Posterior cingulate gyrus (tissue), 11 donors: ENCODE measurements at regions of chr15 and their contacts with region 1.

Region 1: DNA sequence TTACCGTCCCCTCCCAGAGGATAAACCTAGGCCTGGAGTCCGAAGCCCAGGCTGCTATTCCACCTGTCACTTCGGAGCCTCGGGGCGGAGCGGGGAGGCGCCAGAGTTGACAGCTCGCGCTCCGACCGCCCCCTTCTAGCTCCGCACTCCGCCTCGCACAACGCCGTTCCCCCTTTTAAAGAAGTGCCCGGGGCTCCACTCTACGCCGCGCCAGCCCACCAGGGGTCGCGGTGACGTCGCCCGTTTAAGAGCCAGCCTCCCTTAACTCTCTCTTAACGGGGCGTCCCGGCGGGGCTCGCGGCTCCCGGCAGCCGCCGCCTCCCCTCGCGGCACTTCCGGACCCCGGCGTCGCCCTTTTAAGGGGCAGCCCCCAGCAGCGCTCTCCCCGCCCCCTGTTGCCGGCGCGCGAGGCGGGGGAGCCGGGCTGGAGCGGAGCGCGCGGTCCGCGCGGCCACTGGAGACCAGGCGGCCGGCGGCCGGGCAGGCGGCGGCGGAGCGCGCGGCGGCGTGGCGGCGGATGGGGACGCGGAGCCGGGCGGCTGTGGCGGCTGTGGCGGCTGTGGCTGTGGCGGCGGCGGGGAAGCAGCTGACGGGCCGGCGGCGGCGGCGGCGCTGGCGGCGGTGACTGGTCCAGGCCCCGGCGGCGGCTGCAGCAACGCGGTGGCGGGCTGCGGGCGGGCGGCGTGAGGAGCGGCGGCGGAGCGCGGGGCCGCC is at the start of gene INAFM2:
- DNase-seq: peak; percentile 67 to 97 (median 85)

Region 2: DNA sequence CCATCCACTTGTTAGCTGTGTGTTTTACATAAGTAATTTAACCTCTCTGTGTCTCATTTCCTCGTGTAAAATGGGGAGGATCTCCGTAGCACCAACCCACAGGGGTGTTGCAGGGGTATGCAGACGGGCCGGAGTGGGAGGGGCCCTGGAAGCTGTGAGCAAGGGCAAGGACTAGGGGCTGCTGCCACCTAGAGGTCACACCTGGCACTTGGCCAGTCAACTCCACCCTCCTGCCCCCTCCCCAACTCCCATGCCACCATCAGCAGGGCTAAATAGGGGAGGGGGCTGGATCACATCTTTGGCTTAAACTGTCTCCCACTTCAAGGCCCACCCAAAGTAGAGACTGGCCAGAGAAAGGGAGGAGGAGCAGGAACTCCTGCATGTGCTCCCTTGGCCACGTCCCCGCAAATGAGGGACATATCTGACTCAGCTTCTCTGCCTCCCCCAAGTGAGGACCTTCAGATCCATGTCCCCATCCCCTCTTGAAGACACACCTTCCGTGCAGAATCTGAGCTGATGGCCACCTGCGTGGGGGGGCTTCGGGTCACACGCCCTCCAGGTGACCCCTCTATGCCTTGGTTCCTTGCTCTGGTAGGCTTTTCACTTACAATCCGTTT is 14.8 kb after region 1 on chr15:
- intact Hi-C with region 1: loop called (anchors 2 kb)
- DNase-seq: peak in 8 of 10 donors; percentile 47 to 91 (median 58)

Region 3: DNA sequence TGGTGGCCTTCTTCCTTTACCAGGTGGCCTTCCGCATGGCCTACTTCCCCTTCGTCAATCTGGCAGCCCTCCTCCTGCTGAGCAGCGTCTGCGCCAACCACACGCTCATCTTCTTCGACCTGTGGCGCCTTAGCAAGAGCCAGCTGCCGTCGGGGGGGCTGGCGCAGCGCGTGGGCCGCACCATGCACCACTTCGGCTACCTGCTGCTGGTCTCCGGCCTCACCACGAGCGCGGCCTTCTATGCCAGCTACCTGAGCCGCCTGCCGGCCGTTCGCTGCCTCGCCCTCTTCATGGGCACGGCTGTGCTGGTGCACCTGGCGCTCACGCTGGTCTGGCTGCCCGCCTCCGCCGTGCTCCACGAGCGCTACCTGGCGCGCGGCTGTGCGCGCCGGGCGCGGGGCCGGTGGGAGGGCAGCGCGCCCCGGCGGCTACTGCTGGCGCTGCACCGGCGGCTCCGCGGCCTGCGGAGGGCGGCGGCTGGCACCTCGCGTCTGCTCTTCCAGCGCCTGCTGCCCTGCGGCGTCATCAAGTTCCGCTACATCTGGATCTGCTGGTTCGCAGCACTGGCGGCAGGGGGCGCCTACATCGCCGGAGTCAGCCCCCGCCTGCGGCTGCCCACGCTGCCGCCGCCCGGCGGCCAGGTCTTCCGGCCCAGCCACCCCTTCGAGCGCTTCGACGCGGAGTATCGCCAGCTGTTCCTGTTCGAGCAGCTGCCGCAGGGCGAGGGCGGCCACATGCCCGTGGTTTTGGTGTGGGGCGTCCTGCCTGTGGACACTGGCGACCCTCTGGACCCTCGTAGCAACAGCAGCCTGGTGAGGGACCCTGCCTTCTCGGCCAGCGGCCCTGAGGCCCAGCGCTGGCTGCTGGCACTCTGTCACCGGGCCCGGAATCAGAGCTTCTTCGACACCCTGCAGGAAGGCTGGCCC is 44.6 kb after region 1 on chr15:
- intact Hi-C with region 1: loop called (anchors 5 kb)
- DNase-seq: peak; percentile 57 to 96 (median 71)